ENCODE measurements at regions of chr16 and their contacts with region 1.

Region 1: GRCh38 chr16:69465083-69465721 is 40.8 kb downstream of the CYB5B start:
- DNase-seq: peak; percentile 78
- H3K4me3 Mint-ChIP-seq: peak overlapping the region; percentile 58
- H3K27ac Mint-ChIP-seq: peak overlapping the region; percentile 81
- H3K4me1 Mint-ChIP-seq: peaks cover 47% of the 10 kb centered on the region
- H3K27me3 Mint-ChIP-seq: no peaks in the 10 kb centered on the region

Region 2: DNA sequence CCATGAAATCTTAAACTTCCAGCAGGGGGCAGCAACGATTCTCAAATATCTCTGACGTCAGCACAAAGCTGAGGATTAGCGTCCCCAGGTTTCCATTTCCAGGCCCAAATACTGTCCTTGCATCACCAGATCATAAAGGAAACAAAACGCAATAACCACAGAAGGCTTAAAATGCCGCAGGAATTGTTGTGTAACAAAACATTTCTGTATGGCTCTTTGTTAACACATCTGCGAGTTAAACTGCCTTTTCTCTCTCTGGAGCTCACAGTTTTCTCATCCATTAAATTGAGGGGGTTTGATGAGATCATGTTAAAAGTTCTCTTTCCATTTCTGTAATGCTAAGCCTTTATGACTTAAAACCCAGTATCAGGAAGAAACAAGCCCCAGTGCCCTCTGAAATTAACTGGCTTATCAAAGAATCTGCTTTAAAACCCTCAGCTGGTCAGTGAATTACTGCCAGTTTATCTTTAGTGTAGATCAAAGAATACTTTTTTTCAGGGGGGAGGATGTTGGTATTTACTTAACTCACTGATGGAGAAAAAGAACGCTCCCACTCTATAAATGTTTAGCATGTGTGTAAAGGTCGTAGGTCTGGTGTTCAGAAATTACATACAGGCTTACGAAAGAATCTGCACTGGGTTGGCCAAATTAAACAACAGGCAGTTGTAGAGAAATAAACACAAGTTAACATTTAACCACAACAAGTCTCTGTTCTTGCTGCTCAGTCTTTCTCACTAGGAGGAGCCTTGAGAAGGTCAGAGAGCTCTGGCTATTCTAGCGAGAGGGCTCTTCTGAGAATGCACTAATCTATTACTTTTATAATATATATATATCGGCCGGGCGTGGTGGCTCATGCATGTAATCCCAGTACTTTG is 68.8 kb before region 1 on chr16:
- intact Hi-C with region 1: loop called (anchors 5 kb)
- DNase-seq: peak; percentile 92
- H3K4me3 Mint-ChIP-seq: peak overlapping the region; percentile 4
- H3K27ac Mint-ChIP-seq: peak overlapping the region; percentile 15
- H3K4me1 Mint-ChIP-seq: peaks cover 15% of the 10 kb centered on the region
- H3K27me3 Mint-ChIP-seq: peaks cover 3% of the 10 kb centered on the region

Region 3: GRCh38 chr16:69443927-69444631 is 21.1 kb before region 1 on chr16:
- intact Hi-C with region 1: loop called (anchors 1 kb)
- DNase-seq: peak; percentile 70
- H3K4me3 Mint-ChIP-seq: peak overlapping the region; percentile 79
- H3K27ac Mint-ChIP-seq: peak overlapping the region; percentile 87
- H3K4me1 Mint-ChIP-seq: peaks cover 28% of the 10 kb centered on the region
- H3K27me3 Mint-ChIP-seq: no peaks in the 10 kb centered on the region

Region 4: GRCh38 chr16:69486683-69487082 is 21.5 kb after region 1 on chr16:
- intact Hi-C with region 1: no loop called
- DNase-seq: no peak
- H3K4me3 Mint-ChIP-seq: no peak overlapping the region
- H3K27ac Mint-ChIP-seq: no peak overlapping the region
- H3K4me1 Mint-ChIP-seq: no peaks in the 10 kb centered on the region
- H3K27me3 Mint-ChIP-seq: peaks cover 3% of the 10 kb centered on the region

Region 5: GRCh38 chr16:69535123-69536050 is 70.2 kb after region 1 on chr16:
- intact Hi-C with region 1: loop called (anchors 1 kb)
- DNase-seq: no peak
- H3K4me3 Mint-ChIP-seq: no peak overlapping the region
- H3K27ac Mint-ChIP-seq: no peak overlapping the region
- H3K4me1 Mint-ChIP-seq: peaks cover 18% of the 10 kb centered on the region
- H3K27me3 Mint-ChIP-seq: no peaks in the 10 kb centered on the region

Region 6: GRCh38 chr16:69626256-69626655 is 161.1 kb after region 1 on chr16:
- intact Hi-C with region 1: no loop called
- DNase-seq: peak; percentile 37
- H3K4me3 Mint-ChIP-seq: no peak overlapping the region
- H3K27ac Mint-ChIP-seq: no peak overlapping the region
- H3K4me1 Mint-ChIP-seq: peaks cover 2% of the 10 kb centered on the region
- H3K27me3 Mint-ChIP-seq: no peaks in the 10 kb centered on the region

Measured in activated CD4-positive, alpha-beta T cell treated with anti-CD3 and anti-CD28 coated beads, Interleukin-2, amount 10 ng/mL, durations not matched to agents 24 days and 14 days (primary cell).